CD8-positive, alpha-beta T cell (primary cell): ENCODE measurements at regions of chr17 and their contacts with region 1.

Region 1: DNA sequence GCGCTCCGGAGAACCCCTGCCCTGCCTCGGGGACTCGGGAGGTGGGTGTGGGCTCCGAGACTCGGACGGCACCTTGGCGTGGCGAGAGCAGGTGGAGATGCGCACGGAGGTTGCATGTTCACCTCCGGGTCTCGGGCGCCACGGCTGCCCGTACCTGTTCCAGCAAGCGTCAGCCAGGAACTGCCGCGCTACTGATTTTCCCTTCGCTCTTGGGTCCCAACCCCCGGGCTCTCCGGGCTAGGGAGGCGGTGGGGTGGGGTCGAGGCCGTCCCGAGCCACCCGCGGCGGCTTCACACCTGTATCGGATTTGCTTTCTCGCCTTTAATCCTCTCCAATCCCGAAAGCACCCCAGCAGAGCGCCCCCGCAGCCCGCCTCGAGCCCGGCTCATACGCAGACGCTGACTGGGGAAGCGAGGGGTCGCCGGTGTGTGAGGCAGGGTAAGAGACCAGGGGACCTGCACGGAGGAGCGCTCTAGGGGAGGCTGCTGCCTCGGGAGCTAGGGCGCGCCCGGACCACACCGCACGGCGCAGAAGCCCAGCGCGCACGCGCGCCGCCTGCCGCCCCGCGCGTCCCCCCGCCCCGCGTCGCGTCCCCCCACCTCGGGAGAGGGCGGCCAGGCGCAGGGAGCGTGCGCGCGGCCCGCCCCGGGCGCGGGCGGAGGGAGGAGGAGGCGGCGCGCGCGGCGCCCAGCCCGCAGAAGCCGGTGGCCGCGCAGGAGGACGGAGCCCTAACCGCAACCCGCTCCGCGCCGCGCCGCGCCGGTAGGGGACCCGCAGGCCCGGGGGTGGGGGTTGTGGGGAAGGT is at the start of gene DUSP14:
- DNase-seq: peak; percentile 68 to 95 (median 84)
- ATAC-seq: peak; percentile 80
- H3K4me3 ChIP-seq: peak within 1 kb of the TSS; percentile 75 to 98
- H3K4me3 Mint-ChIP-seq: peak within 1 kb of the TSS; percentile 90
- H3K27ac ChIP-seq: peak within 1 kb of the TSS; percentile 72 to 81
- H3K27ac Mint-ChIP-seq: peak within 1 kb of the TSS; percentile 93
- H3K4me1 ChIP-seq: peaks cover 26% of the 10 kb centered on the region
- H3K4me1 Mint-ChIP-seq: peaks cover 27% of the 10 kb centered on the region
- H3K27me3 ChIP-seq: no peaks in the 10 kb centered on the region
- H3K27me3 Mint-ChIP-seq: no peaks in the 10 kb centered on the region
- CTCF ChIP-seq: no peak
- total RNA-seq, gene DUSP14: 5.5 to 6.8 TPM

Region 2: GRCh38 chr17:37358830-37359681 is 130.3 kb before region 1 on chr17:
- CTCF ChIA-PET with region 1: no interaction called
- POLR2A ChIA-PET with region 1: no interaction called
- intact Hi-C with region 1: loop called in 1 of 2 experiments (anchors 1 kb)
- DNase-seq: peak; percentile 77 to 97 (median 88)
- ATAC-seq: peak; percentile 95
- H3K4me3 ChIP-seq: peak overlapping the region; percentile 78 to 98
- H3K4me3 Mint-ChIP-seq: peak overlapping the region; percentile 87
- H3K27ac ChIP-seq: peak overlapping the region; percentile 66 to 82
- H3K27ac Mint-ChIP-seq: peak overlapping the region; percentile 87
- H3K4me1 ChIP-seq: peaks cover 16% of the 10 kb centered on the region
- H3K4me1 Mint-ChIP-seq: peaks cover 18% of the 10 kb centered on the region
- H3K27me3 ChIP-seq: no peaks in the 10 kb centered on the region
- H3K27me3 Mint-ChIP-seq: no peaks in the 10 kb centered on the region
- CTCF ChIP-seq: no peak

Region 3: GRCh38 chr17:37406635-37407461 is 82.6 kb before region 1 on chr17 and contains the starts of genes ACACA and TADA2A:
- CTCF ChIA-PET with region 1: no interaction called
- POLR2A ChIA-PET with region 1: no interaction called
- intact Hi-C with region 1: loop called (anchors 1 kb)
- DNase-seq: peak; percentile 40 to 88 (median 70)
- ATAC-seq: peak; percentile 91
- H3K4me3 ChIP-seq: peak within 1 kb of the TSS; percentile 87 to 90
- H3K4me3 Mint-ChIP-seq: peak within 1 kb of the TSS; percentile 95
- H3K27ac ChIP-seq: peak within 1 kb of the TSS; percentile 61 to 78
- H3K27ac Mint-ChIP-seq: peak within 1 kb of the TSS; percentile 93
- H3K4me1 ChIP-seq: peaks cover 14% of the 10 kb centered on the region
- H3K4me1 Mint-ChIP-seq: peaks cover 43% of the 10 kb centered on the region
- H3K27me3 ChIP-seq: no peaks in the 10 kb centered on the region
- H3K27me3 Mint-ChIP-seq: no peaks in the 10 kb centered on the region
- CTCF ChIP-seq: no peak
- total RNA-seq, gene ACACA: 30.7 to 34.2 TPM
- total RNA-seq, gene TADA2A: 5.3 to 11.1 TPM